K562 (cell line): ENCODE measurements at regions of chr9 and their contacts with region 1.

Region 1: GRCh38 chr9:104795082-104795481 is 31.2 kb downstream of the NIPSNAP3B start:
- DNase-seq: no peak
- ATAC-seq: no peak
- H3K4me3 ChIP-seq: no peak overlapping the region
- H3K27ac ChIP-seq: no peak overlapping the region
- H3K4me1 ChIP-seq: peaks cover 0 to 11% of the 10 kb centered on the region in 2 experiments; a peak in 2 of 5 replicates
- H3K27me3 ChIP-seq: peaks cover 4 to 16% of the 10 kb centered on the region in 2 experiments; a peak in 4 of 5 replicates
- CTCF ChIP-seq: no peak
- EP300 ChIP-seq: no peak
- POLR2A ChIP-seq: no peak
- RAD21 ChIP-seq: no peak

Region 2: DNA sequence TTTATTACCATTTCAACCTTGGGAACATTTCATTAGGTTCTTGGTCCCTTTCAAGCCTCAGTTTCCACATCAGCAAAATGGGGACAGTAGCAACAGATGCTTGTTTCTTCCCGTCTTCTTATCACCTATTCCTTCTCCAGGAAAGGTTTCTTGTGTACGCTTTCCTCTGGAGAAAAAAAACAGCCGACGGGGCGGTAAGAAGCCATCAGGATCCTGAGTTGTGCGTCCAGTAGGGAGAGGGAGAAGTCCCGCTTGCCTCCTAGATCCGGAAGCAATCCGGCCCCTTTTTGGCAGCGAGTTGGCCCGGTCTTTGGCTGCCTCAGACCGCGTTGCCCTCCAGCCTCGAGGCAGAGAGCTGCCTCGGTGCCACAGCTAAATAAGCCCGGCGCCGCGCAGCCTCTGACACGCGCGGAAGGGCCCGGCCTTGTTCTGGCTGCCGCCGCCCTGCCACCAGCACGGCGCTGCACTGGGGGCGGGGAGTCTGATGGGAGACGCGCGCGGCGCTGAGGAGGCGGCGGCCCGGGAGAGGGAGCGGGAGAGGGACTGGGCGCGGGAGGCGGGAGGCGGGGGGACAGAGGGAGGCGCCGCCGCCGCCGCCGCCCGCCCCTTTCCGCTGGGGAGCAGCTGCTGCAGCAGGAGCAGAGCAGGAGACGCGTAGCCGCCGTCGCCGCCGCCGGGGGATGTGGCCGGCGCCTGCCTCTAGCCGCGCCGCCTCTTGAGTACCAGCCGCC is 449.1 kb after region 1 on chr9 and contains the start of gene SLC44A1:
- CTCF ChIA-PET with region 1: no interaction called
- POLR2A ChIA-PET with region 1: no interaction called
- in situ Hi-C with region 1: no loop called
- intact Hi-C with region 1: loop called (anchors 10 kb)
- DNase-seq: peak; percentile 86 to 94 (median 88)
- ATAC-seq: peak; percentile 100
- H3K4me3 ChIP-seq: peak within 1 kb of the TSS; percentile 46
- H3K27ac ChIP-seq: no peak within 1 kb of the TSS
- H3K4me1 ChIP-seq: peaks cover 6 to 16% of the 10 kb centered on the region in 2 experiments; a peak in 4 of 5 replicates
- H3K27me3 ChIP-seq: peaks cover 13% of the 10 kb centered on the region in 2 experiments; a peak in 4 of 5 replicates
- CTCF ChIP-seq: peak in 1 of 3 experiments; percentile 12; a peak in 1 of 6 replicates
- EP300 ChIP-seq: no peak
- POLR2A ChIP-seq: peak; percentile 70
- RAD21 ChIP-seq: 0 out of 4 replicates have a peak, but pooled peaks have one; percentile 12 to 26
- polyA plus RNA-seq, gene SLC44A1: 0.11 to 0.17 TPM